ENCODE measurements at regions of chr6 and their contacts with region 1.

Region 1: DNA sequence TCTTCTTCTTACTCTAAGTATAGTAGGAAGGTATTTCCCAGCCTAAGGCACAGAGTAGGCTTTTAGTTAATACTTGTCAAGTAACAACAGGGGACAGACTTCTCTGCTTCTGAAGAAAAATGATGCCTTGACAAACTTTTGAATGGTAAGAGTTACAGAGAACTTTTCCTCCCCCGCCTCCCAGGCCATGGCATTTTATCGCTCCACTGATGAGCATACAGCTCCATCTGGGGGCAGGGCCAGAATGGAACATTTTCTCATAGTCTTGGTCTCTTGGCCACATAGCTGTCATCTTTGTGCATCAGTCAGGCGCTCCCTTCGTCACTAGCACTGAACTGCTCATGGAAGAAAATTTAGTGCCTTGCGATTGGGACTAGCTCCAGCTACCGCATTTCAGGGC is 1066.8 kb upstream of the CITED2 start:
- DNase-seq: peak; percentile 93
- H3K4me3 ChIP-seq: no peak overlapping the region
- H3K27ac ChIP-seq: peak overlapping the region; percentile 78
- H3K4me1 ChIP-seq: peaks cover 47% of the 10 kb centered on the region
- H3K27me3 ChIP-seq: no peaks in the 10 kb centered on the region
- CTCF ChIP-seq: peak; percentile 70

Region 2: DNA sequence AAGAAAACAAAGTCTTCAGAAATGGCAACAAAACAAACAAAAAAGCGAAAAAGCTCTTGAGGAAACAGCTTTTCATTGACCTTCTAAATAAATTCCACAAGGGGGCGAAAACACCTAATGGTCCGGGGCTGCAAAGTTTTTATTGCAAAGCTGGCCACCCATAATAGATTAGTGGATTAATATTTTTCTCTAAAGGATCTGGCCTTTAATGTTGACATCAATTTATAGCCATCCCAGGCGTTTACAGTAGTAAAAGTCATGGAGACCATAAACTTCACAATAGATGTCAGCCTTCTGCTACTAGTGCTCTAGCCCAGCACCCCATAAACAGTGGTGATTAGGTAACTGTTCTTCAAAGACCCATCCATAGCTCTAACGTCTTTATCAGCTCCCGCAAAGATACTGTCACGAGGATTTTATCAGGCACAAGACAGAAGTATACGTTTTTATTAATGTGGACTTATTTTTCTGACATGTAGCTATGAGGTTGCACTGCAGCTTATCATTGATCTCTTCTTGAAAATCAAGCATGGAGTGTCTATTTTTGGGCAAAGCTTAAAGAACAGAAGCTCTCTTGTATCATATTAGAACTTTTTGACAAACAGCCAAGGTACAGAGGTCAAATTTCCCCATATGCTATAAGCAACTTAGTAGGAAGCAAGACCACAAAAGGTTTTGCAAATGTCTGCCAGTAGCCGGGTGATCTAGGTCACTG is 1071.5 kb before region 1 on chr6:
- CTCF ChIA-PET with region 1: no interaction called
- POLR2A ChIA-PET with region 1: interaction called, 5 read pairs
- intact Hi-C with region 1: loop called (anchors 2 kb)
- DNase-seq: peak; percentile 86
- H3K4me3 ChIP-seq: peak overlapping the region; percentile 87
- H3K27ac ChIP-seq: peak overlapping the region; percentile 96
- H3K4me1 ChIP-seq: peaks cover 43% of the 10 kb centered on the region
- H3K27me3 ChIP-seq: no peaks in the 10 kb centered on the region
- CTCF ChIP-seq: peak; percentile 76

Region 3: GRCh38 chr6:139522511-139523220 is 918.6 kb before region 1 on chr6:
- CTCF ChIA-PET with region 1: no interaction called
- POLR2A ChIA-PET with region 1: no interaction called
- intact Hi-C with region 1: loop called (anchors 5 kb)
- DNase-seq: peak; percentile 52
- H3K4me3 ChIP-seq: no peak overlapping the region
- H3K27ac ChIP-seq: peak overlapping the region; percentile 94
- H3K4me1 ChIP-seq: peaks cover 35% of the 10 kb centered on the region
- H3K27me3 ChIP-seq: no peaks in the 10 kb centered on the region
- CTCF ChIP-seq: no peak

Region 4: GRCh38 chr6:139881728-139882211 is 559.5 kb before region 1 on chr6:
- CTCF ChIA-PET with region 1: no interaction called
- POLR2A ChIA-PET with region 1: no interaction called
- intact Hi-C with region 1: loop called (anchors 5 kb)
- DNase-seq: peak; percentile 79
- H3K4me3 ChIP-seq: no peak overlapping the region
- H3K27ac ChIP-seq: peak overlapping the region; percentile 79
- H3K4me1 ChIP-seq: peaks cover 36% of the 10 kb centered on the region
- H3K27me3 ChIP-seq: no peaks in the 10 kb centered on the region
- CTCF ChIP-seq: peak; percentile 76

Region 5: DNA sequence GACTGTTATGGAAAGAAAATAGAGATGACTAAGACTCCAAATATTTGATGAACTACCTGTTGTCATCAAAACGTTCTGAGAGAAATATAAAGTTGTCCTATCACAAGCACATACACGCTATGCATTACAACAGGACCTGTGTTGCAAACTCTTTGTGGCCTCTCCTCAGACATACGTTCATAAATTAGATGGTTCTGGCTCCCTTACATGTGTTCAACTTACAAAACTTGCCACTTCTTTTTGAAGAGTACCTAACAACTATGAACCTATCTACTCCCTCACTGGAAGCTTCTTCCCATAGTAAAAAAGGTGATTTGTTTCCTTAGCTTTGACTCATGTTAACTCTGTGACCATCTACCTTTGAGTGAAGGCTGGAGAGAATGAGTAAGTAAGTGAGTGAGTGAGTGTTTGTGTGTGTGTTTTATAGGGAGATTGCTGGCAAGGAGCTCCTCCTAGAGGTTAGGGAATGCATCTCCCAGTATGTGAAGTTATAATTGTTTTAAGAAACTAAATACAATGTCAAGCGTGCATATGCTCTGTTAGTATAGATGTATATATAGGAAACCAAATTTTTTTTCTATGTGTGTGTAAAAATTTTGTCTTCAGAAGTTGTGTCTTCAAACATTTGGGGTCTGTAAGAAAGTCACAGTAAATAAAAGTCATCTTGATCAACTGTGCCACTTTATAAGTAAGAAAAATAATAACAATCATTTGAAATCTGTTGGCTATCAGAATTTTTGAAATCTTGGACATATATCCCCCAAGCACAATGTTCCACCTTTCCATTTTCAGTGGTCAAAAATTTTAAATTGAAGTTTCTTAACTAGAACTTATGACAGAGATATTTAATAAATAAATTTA is 480.3 kb after region 1 on chr6:
- CTCF ChIA-PET with region 1: no interaction called
- POLR2A ChIA-PET with region 1: no interaction called
- intact Hi-C with region 1: loop called (anchors 5 kb)
- DNase-seq: peak; percentile 84
- H3K4me3 ChIP-seq: no peak overlapping the region
- H3K27ac ChIP-seq: peak overlapping the region; percentile 24
- H3K4me1 ChIP-seq: peaks cover 10% of the 10 kb centered on the region
- H3K27me3 ChIP-seq: no peaks in the 10 kb centered on the region
- CTCF ChIP-seq: peak; percentile 84

Region 6: GRCh38 chr6:141634269-141634668 is 1193.0 kb after region 1 on chr6:
- CTCF ChIA-PET with region 1: no interaction called
- POLR2A ChIA-PET with region 1: no interaction called
- intact Hi-C with region 1: loop called (anchors 2 kb)
- DNase-seq: no peak
- H3K4me3 ChIP-seq: no peak overlapping the region
- H3K27ac ChIP-seq: peak overlapping the region; percentile 100
- H3K4me1 ChIP-seq: peaks cover 48% of the 10 kb centered on the region
- H3K27me3 ChIP-seq: no peaks in the 10 kb centered on the region
- CTCF ChIP-seq: no peak